Heart left ventricle (tissue), 16 donors: ENCODE measurements at regions of chr17 and their contacts with region 1.

Region 1: DNA sequence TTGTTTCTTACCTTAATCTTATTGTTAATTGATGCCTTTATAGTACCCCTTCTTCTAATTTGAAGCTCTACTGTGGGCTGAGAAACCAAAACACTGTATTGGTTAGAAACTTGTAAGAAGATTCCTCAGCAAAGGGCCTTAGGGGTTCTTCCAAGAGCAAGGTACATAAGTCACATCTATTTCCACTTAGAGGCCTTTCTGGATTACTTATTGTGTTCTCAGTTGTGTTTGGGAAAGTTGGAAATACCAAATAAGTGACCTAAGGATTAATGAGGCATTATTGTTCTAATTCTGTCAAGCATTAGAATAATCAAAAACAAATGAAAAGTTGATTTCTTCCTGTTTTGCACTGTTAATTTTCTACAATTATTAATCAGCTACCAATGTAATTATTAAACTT is 85.8 kb downstream of the SKAP1 start:
- DNase-seq: no peak
- ATAC-seq: no peak
- H3K4me3 ChIP-seq: no peak overlapping the region
- H3K27ac ChIP-seq: no peak overlapping the region
- H3K4me1 ChIP-seq: no peaks in the 10 kb centered on the region
- H3K27me3 ChIP-seq: peaks cover 0 to 84% (median 9%) of the 10 kb centered on the region in 9 donors
- CTCF ChIP-seq: no peak
- POLR2A ChIP-seq: no peak

Region 2: DNA sequence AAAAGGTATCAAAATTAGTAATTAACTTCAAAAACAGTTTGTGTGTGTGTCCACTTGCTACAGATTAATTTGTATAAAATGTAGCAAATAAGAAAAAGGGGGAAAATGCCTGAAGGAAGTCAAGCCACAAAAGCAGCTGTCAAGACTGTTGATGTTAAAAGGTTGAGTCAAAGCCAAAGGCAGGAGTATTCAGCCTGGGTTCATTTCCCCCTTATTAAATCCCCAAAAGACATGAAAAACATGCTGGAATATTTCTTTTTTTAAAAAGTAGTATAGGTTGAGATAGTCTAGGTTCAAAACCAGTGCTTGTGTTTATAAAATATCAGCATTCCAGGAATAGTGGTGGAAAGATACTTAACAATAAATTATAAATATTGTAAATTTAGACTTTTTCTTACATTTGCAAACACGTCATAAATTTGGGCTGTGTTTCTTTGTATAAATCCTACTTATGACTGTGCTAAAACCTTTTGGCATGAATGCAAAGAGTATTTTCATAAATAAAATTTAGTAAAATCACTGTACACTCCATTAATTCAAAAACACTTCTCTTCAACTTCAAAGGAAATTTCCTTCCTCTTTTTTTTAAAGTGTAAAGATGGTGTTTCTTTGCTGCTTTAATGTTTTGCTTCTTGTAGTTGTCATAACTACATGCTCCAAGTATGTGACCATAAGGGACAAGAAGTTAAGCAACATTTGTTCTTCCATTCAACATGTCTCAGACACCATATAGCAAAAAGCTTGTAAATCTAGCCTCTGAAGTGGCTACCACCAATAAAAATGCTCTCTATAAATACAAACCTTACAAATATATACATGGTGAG is 13.7 kb after region 1 on chr17:
- intact Hi-C with region 1: loop called in 1 of 10 experiments (anchors 2 kb)
- DNase-seq: no peak
- ATAC-seq: no peak
- H3K4me3 ChIP-seq: no peak overlapping the region
- H3K27ac ChIP-seq: no peak overlapping the region
- H3K4me1 ChIP-seq: no peaks in the 10 kb centered on the region
- H3K27me3 ChIP-seq: peaks cover 0 to 85% (median 20%) of the 10 kb centered on the region in 9 donors
- CTCF ChIP-seq: no peak
- POLR2A ChIP-seq: no peak